ENCODE measurements at regions of chr12 and their contacts with region 1.

Region 1: DNA sequence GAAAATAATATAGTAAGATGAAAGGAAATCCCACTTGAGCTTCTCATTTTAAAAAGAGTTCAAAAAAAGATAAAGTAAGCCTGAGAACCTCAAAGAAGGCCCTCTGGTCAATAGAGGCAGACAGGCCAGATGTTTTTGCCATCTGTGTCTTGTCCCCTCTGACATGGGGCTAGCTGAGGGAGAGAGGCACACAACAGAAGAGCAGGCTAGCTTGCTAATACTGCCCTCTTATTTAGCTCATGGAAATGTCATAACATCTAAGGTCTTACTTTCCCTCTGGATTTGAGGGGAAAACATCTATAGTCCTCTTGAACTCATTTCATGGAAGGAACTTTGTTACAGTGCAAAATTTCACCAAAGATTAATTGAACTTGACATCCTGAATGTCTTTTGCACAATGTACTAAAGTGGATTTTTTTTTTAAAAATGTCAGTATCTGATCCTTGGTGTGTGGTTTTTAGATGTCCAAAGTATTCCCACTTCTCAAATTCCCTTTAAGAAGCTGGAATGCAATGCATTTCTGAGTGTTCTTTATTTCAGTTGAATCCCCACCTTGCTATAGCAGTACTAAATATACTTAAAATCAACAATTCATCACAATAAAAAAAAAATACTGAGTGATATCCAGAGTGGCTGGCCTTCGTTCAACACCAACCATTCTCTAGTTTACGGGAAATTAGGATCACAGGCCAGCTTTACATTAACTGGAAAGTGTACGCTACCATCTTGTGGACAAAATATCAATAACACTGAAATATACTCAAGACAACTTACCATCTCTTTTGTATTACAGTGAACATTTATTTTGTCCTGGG is 176.7 kb downstream of the PAH start:
- DNase-seq: no peak
- ATAC-seq: peak; percentile 64
- H3K4me3 ChIP-seq: no peak overlapping the region
- H3K27ac ChIP-seq: no peak overlapping the region
- H3K4me1 ChIP-seq: peaks cover 1% of the 10 kb centered on the region
- H3K27me3 ChIP-seq: no peaks in the 10 kb centered on the region
- CTCF ChIP-seq: peak; percentile 17 to 64 (median 37); a peak in 3 of 6 replicates
- EP300 ChIP-seq: no peak
- POLR2A ChIP-seq: no peak
- RAD21 ChIP-seq: peak; percentile 74

Region 2: GRCh38 chr12:101839324-101840283 is 900.7 kb before region 1 on chr12:
- CTCF ChIA-PET with region 1: interaction called, 12 read pairs
- POLR2A ChIA-PET with region 1: no interaction called
- RAD21 ChIA-PET with region 1: no interaction called
- SMC1A ChIA-PET with region 1: no interaction called
- in situ Hi-C with region 1: no loop called
- intact Hi-C with region 1: no loop called
- DNase-seq: no peak
- ATAC-seq: peak; percentile 84
- H3K4me3 ChIP-seq: no peak overlapping the region
- H3K27ac ChIP-seq: peak overlapping the region; percentile 54
- H3K4me1 ChIP-seq: peaks cover 15% of the 10 kb centered on the region
- H3K27me3 ChIP-seq: no peaks in the 10 kb centered on the region
- CTCF ChIP-seq: peak; percentile 76 to 86 (median 80)
- EP300 ChIP-seq: no peak
- POLR2A ChIP-seq: no peak
- RAD21 ChIP-seq: peak; percentile 78

Region 3: GRCh38 chr12:102169922-102170621 is 570.3 kb before region 1 on chr12:
- CTCF ChIA-PET with region 1: interaction called, 55 read pairs
- POLR2A ChIA-PET with region 1: interaction called, 3 read pairs
- RAD21 ChIA-PET with region 1: interaction called, 42 read pairs
- SMC1A ChIA-PET with region 1: interaction called, 20 read pairs
- in situ Hi-C with region 1: no loop called
- intact Hi-C with region 1: loop called (anchors 1 kb)
- DNase-seq: no peak
- ATAC-seq: peak; percentile 73
- H3K4me3 ChIP-seq: no peak overlapping the region
- H3K27ac ChIP-seq: no peak overlapping the region
- H3K4me1 ChIP-seq: peaks cover 5% of the 10 kb centered on the region
- H3K27me3 ChIP-seq: no peaks in the 10 kb centered on the region
- CTCF ChIP-seq: peak; percentile 72 to 79 (median 78)
- EP300 ChIP-seq: no peak
- POLR2A ChIP-seq: no peak
- RAD21 ChIP-seq: peak; percentile 80

Region 4: DNA sequence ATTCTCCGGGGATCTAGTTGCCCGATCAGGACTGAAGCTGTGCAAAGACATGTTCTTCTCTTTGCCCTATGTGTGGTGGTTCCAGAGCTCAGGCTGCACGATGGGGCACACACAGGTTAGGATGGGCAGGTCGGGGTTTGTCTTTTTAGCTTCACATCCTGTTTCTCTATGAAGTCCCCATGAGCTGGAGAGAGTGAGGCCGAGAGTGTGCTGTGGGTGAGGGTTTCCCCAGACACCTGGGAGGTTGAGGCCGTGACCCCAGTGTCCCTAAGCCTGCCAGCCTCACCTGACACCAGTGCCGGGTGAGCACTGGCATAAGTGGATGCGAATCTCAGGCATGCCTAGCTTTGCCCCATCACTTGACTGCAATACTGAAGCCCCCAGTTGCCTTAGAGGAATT is 227.1 kb before region 1 on chr12:
- CTCF ChIA-PET with region 1: interaction called, 7 read pairs
- POLR2A ChIA-PET with region 1: no interaction called
- RAD21 ChIA-PET with region 1: interaction called, 3 read pairs
- SMC1A ChIA-PET with region 1: interaction called, 11 read pairs
- in situ Hi-C with region 1: no loop called
- intact Hi-C with region 1: no loop called
- DNase-seq: peak; percentile 48
- ATAC-seq: peak; percentile 95
- H3K4me3 ChIP-seq: no peak overlapping the region
- H3K27ac ChIP-seq: peak overlapping the region; percentile 45
- H3K4me1 ChIP-seq: peaks cover 19% of the 10 kb centered on the region
- H3K27me3 ChIP-seq: no peaks in the 10 kb centered on the region
- CTCF ChIP-seq: no peak
- EP300 ChIP-seq: 0 out of 4 replicates have a peak, but pooled peaks of 1 of the 2 experiments have one; percentile 45
- POLR2A ChIP-seq: no peak
- RAD21 ChIP-seq: no peak

Region 5: DNA sequence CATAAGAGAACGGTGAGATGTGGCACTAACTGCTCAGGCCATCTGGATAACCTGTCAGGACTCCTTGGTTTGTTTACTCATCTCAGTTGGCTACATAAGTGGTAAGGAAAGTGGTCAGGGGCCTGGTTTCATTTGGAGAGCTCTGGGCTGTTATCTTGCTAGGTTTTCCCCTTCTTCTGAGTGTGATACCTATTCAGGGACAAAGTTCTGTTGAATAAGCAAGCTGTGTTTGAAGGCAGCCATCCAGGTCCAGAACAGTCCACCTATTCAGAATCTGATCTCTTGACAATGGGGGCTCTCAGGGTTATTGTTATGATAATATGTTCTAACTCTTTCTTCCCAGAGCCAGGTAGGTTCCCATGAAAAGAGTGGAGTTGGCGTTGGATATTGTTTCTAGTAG is 18.2 kb before region 1 on chr12:
- CTCF ChIA-PET with region 1: interaction called, 12 read pairs
- POLR2A ChIA-PET with region 1: interaction called, 3 read pairs
- RAD21 ChIA-PET with region 1: interaction called, 14 read pairs
- SMC1A ChIA-PET with region 1: interaction called, 14 read pairs
- in situ Hi-C with region 1: no loop called
- intact Hi-C with region 1: no loop called
- DNase-seq: no peak
- ATAC-seq: no peak
- H3K4me3 ChIP-seq: no peak overlapping the region
- H3K27ac ChIP-seq: no peak overlapping the region
- H3K4me1 ChIP-seq: no peaks in the 10 kb centered on the region; the same call in 1 of the 2 replicates
- H3K27me3 ChIP-seq: no peaks in the 10 kb centered on the region
- CTCF ChIP-seq: no peak
- EP300 ChIP-seq: no peak
- POLR2A ChIP-seq: no peak
- RAD21 ChIP-seq: no peak

Region 6: DNA sequence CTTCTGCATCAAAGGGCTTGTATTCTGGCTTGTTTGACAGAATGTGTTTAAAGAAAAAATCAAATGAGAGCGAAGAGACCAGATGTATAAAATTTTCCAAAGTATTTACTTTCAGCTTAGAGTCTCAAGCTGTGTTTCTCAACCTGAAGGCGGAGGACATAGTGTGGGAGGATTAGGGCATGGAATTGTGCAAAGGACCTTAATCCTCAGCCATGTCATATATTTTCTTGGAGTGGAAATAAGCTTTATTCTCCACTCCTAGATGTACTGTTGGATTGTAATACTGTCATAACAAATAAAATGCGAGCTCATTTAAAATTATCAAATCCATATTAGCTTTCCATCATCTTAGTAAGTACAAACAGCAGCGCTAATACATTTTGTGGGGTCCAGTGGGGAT is 22.7 kb after region 1 on chr12:
- CTCF ChIA-PET with region 1: interaction called, 43 read pairs
- POLR2A ChIA-PET with region 1: interaction called, 3 read pairs
- RAD21 ChIA-PET with region 1: interaction called, 32 read pairs
- SMC1A ChIA-PET with region 1: interaction called, 32 read pairs
- in situ Hi-C with region 1: no loop called
- intact Hi-C with region 1: no loop called
- DNase-seq: no peak
- ATAC-seq: no peak
- H3K4me3 ChIP-seq: no peak overlapping the region
- H3K27ac ChIP-seq: no peak overlapping the region
- H3K4me1 ChIP-seq: no peaks in the 10 kb centered on the region
- H3K27me3 ChIP-seq: no peaks in the 10 kb centered on the region
- CTCF ChIP-seq: no peak
- EP300 ChIP-seq: no peak
- POLR2A ChIP-seq: no peak
- RAD21 ChIP-seq: no peak

Region 7: DNA sequence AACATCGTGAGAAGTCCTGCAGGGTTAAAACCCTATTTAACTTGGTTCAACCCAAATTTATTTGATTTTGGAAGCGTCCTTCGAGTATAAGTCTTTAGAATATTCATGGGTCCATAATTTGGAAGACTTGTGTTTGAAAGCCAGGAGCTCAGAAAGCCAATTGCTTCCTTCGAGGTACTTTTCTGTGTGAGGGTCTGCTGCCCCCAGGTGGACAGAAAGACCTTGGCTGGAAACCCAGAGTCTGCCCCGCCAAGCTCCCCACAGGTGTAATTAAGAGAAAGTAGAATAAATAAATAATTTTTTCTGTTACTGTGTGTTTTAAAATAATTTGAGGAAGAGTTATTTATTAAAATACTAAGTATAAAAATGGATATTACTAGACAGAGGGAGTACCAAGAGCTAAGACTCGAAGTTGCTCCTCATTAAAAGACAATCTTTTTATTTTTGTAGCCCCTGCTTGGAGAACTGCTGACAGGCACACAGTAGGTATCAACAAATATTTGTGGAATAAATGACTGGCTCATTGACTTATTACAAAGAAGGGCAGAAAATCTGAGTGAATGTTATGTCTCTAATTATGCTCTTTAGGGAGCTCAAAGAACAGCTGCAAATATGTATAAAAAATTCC is 70.9 kb after region 1 on chr12:
- CTCF ChIA-PET with region 1: interaction called, 45 read pairs
- POLR2A ChIA-PET with region 1: no interaction called
- RAD21 ChIA-PET with region 1: interaction called, 26 read pairs
- SMC1A ChIA-PET with region 1: interaction called, 12 read pairs
- in situ Hi-C with region 1: no loop called
- intact Hi-C with region 1: no loop called
- DNase-seq: no peak
- ATAC-seq: peak; percentile 74
- H3K4me3 ChIP-seq: no peak overlapping the region
- H3K27ac ChIP-seq: no peak overlapping the region
- H3K4me1 ChIP-seq: no peaks in the 10 kb centered on the region
- H3K27me3 ChIP-seq: no peaks in the 10 kb centered on the region; a peak in 1 of 4 replicates
- CTCF ChIP-seq: peak; percentile 63 to 66 (median 64); a peak in 5 of 6 replicates
- EP300 ChIP-seq: no peak
- POLR2A ChIP-seq: no peak
- RAD21 ChIP-seq: peak; percentile 77

Measured in GM12878 (cell line).